Calu3 (cell line): ENCODE measurements at regions of chr7 and their contacts with region 1.

Region 1: GRCh38 chr7:7553386-7553785 is 13.3 kb upstream of the MIOS start:
- DNase-seq: no peak
- H3K4me3 Mint-ChIP-seq: no peak overlapping the region
- H3K27ac Mint-ChIP-seq: no peak overlapping the region
- H3K4me1 Mint-ChIP-seq: peaks cover 26% of the 10 kb centered on the region
- H3K27me3 Mint-ChIP-seq: no peaks in the 10 kb centered on the region
- CTCF ChIP-seq: no peak

Region 2: GRCh38 chr7:7157177-7157886 is 396.1 kb before region 1 on chr7:
- CTCF ChIA-PET with region 1: no interaction called
- intact Hi-C with region 1: no loop called
- DNase-seq: peak; percentile 15
- H3K4me3 Mint-ChIP-seq: no peak overlapping the region
- H3K27ac Mint-ChIP-seq: no peak overlapping the region
- H3K4me1 Mint-ChIP-seq: peaks cover 14% of the 10 kb centered on the region
- H3K27me3 Mint-ChIP-seq: no peaks in the 10 kb centered on the region
- CTCF ChIP-seq: no peak

Region 3: DNA sequence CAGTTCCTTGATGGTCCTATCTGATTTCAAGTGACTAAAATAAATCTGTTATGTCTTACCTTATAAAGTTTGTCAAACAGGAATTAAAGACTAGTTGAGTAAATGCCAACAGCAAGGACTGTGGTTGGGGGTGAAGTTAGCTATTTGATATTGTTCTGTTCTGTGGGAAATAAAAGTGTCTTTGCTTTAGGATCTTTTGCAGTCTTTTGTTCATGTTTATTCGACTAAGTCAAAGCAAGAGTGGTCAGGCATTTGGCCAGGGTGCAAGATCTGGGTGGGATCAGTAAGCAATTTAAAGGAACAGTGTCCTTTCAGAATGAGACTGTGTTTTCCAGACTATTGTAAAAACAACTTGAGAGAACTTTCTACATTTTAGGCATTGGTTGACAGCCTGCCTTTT is 17.7 kb before region 1 on chr7 and contains the start of gene COL28A1:
- CTCF ChIA-PET with region 1: no interaction called
- intact Hi-C with region 1: loop called (anchors 2 kb)
- DNase-seq: no peak
- H3K4me3 Mint-ChIP-seq: no peak within 1 kb of the TSS
- H3K27ac Mint-ChIP-seq: no peak within 1 kb of the TSS
- H3K4me1 Mint-ChIP-seq: peaks cover 6% of the 10 kb centered on the region
- H3K27me3 Mint-ChIP-seq: no peaks in the 10 kb centered on the region
- CTCF ChIP-seq: no peak
- total RNA-seq, gene COL28A1: 1.3 and 3.2 TPM in 2 replicates

Region 4: DNA sequence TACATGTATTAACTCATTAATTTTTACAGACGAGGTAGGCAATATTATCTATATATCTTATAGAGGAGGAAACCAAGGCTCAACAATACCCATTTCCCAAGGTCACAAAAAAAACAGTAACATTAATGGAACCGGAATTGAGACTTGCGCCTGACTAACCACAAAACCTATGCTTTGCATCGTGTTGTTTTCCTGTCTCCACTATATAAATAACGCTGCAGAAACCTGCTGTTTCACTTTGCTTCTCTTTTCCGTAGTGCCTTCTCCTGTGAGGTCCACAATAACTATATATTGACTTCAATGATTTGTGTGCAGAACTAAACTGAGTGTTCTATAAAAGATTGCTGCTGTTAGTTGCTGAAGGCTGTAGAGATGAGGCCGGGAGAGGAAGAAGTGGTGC is 262.7 kb after region 1 on chr7:
- CTCF ChIA-PET with region 1: no interaction called
- intact Hi-C with region 1: no loop called
- DNase-seq: no peak
- H3K4me3 Mint-ChIP-seq: no peak overlapping the region
- H3K27ac Mint-ChIP-seq: no peak overlapping the region
- H3K4me1 Mint-ChIP-seq: peaks cover 39% of the 10 kb centered on the region
- H3K27me3 Mint-ChIP-seq: no peaks in the 10 kb centered on the region
- CTCF ChIP-seq: no peak

Region 5: DNA sequence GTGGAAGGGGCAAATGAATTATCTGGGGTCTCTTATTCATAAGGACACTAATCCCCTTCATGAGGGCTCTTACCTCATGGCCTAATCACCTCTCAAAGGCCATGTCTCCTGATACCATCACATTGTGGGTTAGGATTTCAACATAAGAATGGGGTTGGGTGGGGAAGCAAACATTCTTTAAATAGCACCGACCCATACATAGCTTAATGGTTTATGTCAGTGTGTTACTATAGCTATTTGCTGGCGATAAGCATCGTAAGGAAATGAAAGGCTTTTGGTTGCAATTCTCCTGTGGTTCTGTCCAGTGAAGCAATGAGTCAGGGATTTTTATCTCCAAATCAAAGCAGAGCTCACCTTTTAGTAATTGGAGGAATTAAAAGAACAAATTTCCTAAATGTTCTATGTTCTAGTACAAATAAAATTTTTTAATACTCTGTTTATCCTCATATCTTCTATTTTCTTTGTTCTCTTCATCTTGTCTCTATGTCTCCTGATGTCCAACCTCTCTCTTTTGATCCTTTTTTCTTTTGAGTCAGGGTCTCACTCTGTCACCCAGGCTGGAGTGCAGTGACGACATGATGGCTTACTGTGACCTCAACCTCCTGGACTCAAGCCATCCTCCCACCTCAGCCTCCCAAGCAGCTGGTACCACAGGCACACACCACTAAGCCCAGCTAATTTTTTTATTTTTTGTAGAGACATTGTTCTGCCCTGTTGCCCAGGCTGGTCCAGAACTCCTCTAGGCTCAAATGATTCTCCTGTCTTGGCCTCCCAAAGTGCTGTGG is 358.2 kb after region 1 on chr7:
- CTCF ChIA-PET with region 1: no interaction called
- intact Hi-C with region 1: no loop called
- DNase-seq: peak; percentile 55
- H3K4me3 Mint-ChIP-seq: peak overlapping the region; percentile 3
- H3K27ac Mint-ChIP-seq: peak overlapping the region; percentile 40
- H3K4me1 Mint-ChIP-seq: peaks cover 18% of the 10 kb centered on the region
- H3K27me3 Mint-ChIP-seq: no peaks in the 10 kb centered on the region
- CTCF ChIP-seq: no peak